ENCODE measurements at regions of chr20 and their contacts with region 1.

Region 1: DNA sequence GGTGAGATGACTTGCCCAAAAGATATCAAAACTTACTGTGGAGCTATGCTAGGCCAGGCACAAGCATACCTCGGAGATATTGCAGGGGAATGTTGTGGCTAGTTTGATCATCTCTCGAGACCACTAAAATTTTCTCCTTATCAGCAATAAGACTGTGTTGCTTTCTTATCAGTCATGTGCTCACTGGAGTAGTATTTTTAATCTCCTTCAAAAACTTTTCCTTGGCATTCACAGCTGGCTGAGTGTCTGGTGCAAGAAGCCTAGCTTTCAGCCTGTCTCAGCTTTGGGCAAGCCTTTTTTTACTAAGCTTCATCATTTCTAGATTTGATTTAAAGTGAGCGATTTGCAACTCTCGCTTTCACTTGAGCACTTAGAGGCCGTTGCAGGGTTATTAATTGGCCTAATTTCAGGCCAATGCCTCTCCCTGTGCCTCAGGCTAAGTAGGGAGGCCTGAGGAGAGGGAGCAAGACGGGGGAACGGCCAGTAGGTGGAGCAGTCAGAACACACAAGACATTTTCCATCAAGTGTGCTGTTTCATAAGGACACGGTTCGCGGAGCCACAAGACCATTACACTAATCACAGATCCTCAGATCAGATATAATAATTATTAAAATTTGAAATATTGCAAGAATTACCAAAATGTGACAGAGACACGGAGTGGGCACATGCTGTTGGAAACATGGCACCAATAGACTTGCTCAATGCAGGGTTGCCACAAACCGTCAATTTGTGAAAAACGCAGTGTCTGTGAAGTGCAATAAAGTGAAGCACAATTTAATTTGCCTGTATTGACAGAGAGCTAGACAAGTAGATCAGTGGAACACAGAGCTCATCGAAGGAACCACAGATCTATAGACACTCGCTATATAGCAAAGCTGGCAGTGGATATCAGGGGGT is 106.8 kb upstream of the SIRPG start:
- DNase-seq: peak; percentile 61 to 80 (median 74)
- ATAC-seq: peak; percentile 77 to 95 (median 89)
- H3K4me3 ChIP-seq: no peak overlapping the region
- H3K27ac ChIP-seq: no peak overlapping the region
- H3K4me1 ChIP-seq: peaks cover 0 to 4% (median 0%) of the 10 kb centered on the region in 12 donors
- H3K27me3 ChIP-seq: no peaks in the 10 kb centered on the region
- CTCF ChIP-seq: peak; percentile 59 to 81 (median 72)
- POLR2A ChIP-seq: no peak

Region 2: GRCh38 chr20:1844325-1845162 is 80.2 kb after region 1 on chr20:
- intact Hi-C with region 1: no loop called
- DNase-seq: peak in 4 of 5 donors; percentile 50 to 69 (median 58)
- ATAC-seq: peak; percentile 26 to 85 (median 66)
- H3K4me3 ChIP-seq: no peak overlapping the region
- H3K27ac ChIP-seq: peak overlapping the region in 2 of 12 donors; percentile 75 to 82
- H3K4me1 ChIP-seq: peaks cover 0 to 56% (median 2%) of the 10 kb centered on the region in 12 donors
- H3K27me3 ChIP-seq: no peaks in the 10 kb centered on the region
- CTCF ChIP-seq: no peak
- POLR2A ChIP-seq: no peak

Region 3: DNA sequence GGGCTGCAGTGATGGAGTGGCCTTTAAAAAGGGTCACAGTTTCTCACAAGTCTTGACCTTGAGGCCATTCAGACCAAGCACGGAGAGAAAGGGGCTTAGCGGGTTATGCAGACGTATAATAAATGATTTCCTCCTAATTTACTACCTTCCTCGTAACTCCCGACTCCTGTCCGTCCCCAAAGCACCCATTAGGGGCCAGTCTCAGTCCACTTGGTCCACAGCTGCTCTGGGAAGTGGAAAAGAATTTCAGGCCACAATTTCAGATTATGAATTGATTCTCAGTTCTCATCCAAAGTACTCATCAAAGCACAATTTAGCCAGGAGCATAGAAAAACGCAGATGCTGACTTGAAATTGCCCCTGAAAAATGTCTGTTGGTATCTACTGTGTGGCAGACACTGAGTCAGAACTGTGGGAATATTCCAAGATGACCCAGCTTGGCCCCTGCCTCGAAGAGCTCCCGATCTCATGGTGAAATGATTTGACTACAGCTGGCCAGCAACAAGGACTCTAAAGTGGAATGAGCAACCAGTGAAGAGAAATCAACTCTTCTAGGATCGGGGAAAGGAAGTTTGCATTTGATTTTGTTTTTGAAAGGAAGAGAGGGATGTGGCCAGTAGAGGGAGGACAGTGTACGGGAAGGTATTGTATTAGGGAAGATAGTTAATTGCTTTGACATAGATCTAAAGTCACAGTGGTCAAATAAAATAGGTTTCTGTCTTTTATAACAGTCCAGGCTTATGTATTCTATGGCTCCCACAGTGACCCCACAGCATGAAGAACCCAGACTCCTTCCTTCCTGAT is 322.0 kb after region 1 on chr20:
- intact Hi-C with region 1: loop called in 2 of 10 experiments (anchors 10 kb)
- DNase-seq: no peak
- ATAC-seq: peak; percentile 34 to 62 (median 54)
- H3K4me3 ChIP-seq: no peak overlapping the region
- H3K27ac ChIP-seq: no peak overlapping the region
- H3K4me1 ChIP-seq: peaks cover 0 to 3% (median 0%) of the 10 kb centered on the region in 12 donors
- H3K27me3 ChIP-seq: peaks cover 0 to 35% (median 3%) of the 10 kb centered on the region in 9 donors
- CTCF ChIP-seq: peak in 9 of 12 donors; percentile 17 to 47 (median 34)
- POLR2A ChIP-seq: no peak

Region 4: DNA sequence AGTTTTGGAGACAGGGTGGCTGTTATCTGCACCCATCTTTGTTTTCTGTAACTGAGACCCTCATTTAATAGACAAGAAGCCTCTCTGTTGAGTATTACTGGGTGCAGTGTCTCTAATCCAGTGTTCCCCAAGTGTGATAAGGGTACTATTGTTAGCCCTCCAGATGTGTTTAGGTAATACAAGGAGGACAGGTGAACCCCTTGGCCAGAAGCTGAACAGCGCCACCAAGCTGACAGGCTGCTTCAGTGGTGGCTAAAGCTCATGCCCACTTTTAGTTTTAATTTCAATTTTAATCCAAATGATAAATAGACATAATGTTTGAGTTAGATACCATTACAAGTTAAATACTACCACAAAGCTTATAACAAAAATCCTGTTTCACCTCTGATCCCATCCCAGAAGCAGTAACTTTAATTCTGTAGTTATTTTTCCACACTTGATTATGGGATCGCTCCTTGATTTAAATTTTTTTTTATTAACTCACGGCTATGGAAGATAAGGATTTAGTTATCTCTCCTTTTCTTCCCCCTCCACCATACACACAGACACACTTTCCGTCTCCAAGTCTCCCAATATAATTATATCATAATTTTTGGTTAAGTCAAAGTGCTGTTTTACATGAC is 328.9 kb after region 1 on chr20:
- intact Hi-C with region 1: loop called in 2 of 10 experiments (anchors 10 kb)
- DNase-seq: no peak
- ATAC-seq: no peak
- H3K4me3 ChIP-seq: no peak overlapping the region
- H3K27ac ChIP-seq: no peak overlapping the region
- H3K4me1 ChIP-seq: no peaks in the 10 kb centered on the region
- H3K27me3 ChIP-seq: peaks cover 0 to 54% (median 14%) of the 10 kb centered on the region in 9 donors
- CTCF ChIP-seq: peak in 9 of 12 donors; percentile 11 to 47 (median 28)
- POLR2A ChIP-seq: no peak

Region 5: GRCh38 chr20:2162125-2162822 is 397.9 kb after region 1 on chr20:
- intact Hi-C with region 1: loop called in 1 of 10 experiments (anchors 10 kb)
- DNase-seq: no peak
- ATAC-seq: peak in 1 of 4 donors; percentile 31
- H3K4me3 ChIP-seq: no peak overlapping the region
- H3K27ac ChIP-seq: no peak overlapping the region
- H3K4me1 ChIP-seq: no peaks in the 10 kb centered on the region
- H3K27me3 ChIP-seq: no peaks in the 10 kb centered on the region
- CTCF ChIP-seq: no peak
- POLR2A ChIP-seq: no peak

Region 6: DNA sequence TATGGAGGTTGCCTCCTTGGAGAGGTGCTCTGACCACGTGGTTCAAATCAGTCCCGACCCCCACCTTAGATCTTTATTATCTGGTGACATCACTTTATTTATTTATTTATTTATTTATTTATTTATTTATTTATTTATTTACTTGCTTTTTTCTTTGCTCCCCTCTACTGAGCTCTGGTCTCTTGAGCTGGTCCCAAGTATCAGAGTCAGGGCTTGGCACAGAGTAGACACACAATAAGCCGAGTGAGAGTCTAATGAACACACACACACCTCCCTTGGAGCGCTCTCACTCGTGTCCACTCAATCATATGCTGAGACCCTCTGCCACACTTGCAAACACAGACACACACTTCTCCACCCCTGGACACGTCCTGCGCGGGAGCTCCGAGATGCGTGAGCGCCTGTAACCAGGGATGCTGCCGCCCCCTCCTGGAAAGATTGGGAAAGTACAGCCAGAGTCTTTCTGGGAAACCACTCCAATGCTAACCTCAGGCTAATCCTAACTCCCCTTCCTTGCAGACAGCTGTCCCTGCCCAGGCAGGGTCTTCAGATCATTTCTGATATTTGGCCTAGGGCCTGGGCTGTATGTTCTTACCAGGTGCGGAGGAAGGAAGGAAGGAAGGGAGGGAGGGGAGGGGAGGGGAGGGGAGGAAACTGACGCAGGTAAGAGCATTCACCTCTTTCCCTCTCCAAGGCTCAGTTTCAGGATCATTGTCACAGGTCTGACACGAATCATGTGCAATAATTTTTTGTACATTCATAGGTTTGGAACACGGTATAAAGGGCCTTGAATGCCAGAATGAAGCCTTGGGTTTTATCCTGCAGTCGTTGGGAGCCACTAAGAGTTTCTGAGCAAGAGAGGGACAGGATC is 408.2 kb after region 1 on chr20:
- intact Hi-C with region 1: loop called in 7 of 10 experiments (anchors 5 to 10 kb)
- DNase-seq: peak; percentile 66 to 84 (median 71)
- ATAC-seq: peak; percentile 52 to 88 (median 82)
- H3K4me3 ChIP-seq: no peak overlapping the region
- H3K27ac ChIP-seq: no peak overlapping the region
- H3K4me1 ChIP-seq: peaks cover 0 to 15% (median 2%) of the 10 kb centered on the region in 12 donors
- H3K27me3 ChIP-seq: no peaks in the 10 kb centered on the region
- CTCF ChIP-seq: peak; percentile 78 to 96 (median 90)
- POLR2A ChIP-seq: no peak

Region 7: GRCh38 chr20:2451939-2452732 is 687.8 kb after region 1 on chr20:
- intact Hi-C with region 1: loop called in 8 of 10 experiments (anchors 2 to 10 kb)
- DNase-seq: peak; percentile 63 to 70 (median 67)
- ATAC-seq: peak in 3 of 4 donors; percentile 65 to 82 (median 78)
- H3K4me3 ChIP-seq: no peak overlapping the region
- H3K27ac ChIP-seq: no peak overlapping the region
- H3K4me1 ChIP-seq: peaks cover 0 to 5% (median 0%) of the 10 kb centered on the region in 12 donors
- H3K27me3 ChIP-seq: no peaks in the 10 kb centered on the region
- CTCF ChIP-seq: peak; percentile 70 to 92 (median 80)
- POLR2A ChIP-seq: no peak